ENCODE measurements at regions of chr13 and their contacts with region 1.

Region 1: DNA sequence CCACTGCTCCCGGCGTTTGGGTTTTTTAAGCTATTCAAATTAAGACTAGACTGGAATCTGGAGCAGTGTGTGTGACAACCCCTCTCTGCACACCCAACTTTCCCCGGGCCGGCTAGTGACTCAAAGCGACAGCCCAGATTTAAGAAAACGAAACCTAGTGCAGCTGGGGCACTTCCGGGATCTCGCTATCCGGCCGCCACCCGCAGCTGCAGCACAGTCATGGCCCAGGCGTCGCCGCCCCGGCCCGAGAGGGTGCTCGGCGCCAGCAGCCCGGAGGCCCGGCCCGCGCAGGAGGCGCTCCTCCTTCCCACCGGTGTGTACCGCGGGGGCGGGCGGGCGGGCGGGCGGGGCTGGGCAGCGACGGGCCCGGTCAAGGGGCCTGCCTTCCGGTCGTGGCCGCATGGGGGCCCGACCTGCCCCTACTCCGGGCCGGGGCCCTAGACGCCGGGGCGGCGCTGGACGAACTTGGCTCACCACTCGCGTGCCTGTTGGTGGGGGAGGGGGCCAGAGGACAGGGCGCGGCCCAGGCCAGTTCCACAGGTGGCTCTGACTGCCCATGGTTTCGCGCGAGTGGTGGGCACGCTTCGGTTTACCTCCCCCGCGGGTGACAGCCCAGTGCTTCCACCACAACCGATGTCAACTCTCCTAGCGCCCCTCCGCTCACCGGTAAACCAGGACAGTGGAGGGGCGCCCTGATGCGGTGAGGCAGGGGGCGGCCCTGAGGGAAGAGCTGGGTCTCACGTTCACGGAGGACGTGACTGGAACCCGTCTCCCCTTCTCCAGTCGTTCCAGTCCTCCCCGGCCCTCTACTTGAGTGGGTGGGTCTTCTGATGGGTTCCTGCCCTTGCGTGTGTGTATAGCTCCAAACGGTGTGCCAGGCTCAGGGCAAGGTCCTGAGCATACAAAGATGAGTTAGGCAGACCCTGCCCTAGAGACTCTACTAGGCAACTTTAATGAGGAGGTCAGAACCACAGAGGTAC is at the start of gene PHF11:
- DNase-seq: peak; percentile 92
- ATAC-seq: peak; percentile 80
- H3K4me3 ChIP-seq: peak within 1 kb of the TSS; percentile 67 to 90 (median 77)
- H3K4me3 Mint-ChIP-seq: peak within 1 kb of the TSS; percentile 95
- H3K27ac ChIP-seq: peak within 1 kb of the TSS; percentile 89 to 95
- H3K27ac Mint-ChIP-seq: peak within 1 kb of the TSS; percentile 99
- H3K4me1 ChIP-seq: peaks cover 6 to 20% of the 10 kb centered on the region in 2 donors
- H3K4me1 Mint-ChIP-seq: peaks cover 40% of the 10 kb centered on the region
- H3K27me3 ChIP-seq: no peaks in the 10 kb centered on the region
- H3K27me3 Mint-ChIP-seq: no peaks in the 10 kb centered on the region
- CTCF ChIP-seq: no peak
- total RNA-seq, gene PHF11: 176 and 181 TPM in 2 replicates

Region 2: DNA sequence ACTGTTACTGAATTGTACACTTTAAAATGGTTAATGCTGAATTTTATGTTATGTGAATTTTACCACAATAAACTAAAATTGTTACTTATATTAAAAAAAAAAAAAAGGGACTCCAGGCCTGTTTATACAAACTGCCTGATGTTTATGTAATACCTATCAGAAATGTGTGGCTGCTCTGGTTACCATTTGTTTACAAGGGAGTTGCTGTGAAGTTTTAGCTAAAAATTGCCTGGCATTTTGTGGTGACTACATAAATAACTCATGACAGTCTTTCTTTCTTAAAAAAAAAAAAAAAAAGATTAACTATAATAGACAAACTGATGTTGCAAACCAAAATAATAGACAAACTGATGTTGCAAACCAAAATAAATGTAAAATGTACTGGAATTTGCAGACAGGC is 176.5 kb before region 1 on chr13:
- CTCF ChIA-PET with region 1: no interaction called
- POLR2A ChIA-PET with region 1: interaction called, 11 read pairs
- intact Hi-C with region 1: no loop called
- DNase-seq: no peak
- ATAC-seq: no peak
- H3K4me3 ChIP-seq: no peak overlapping the region
- H3K4me3 Mint-ChIP-seq: no peak overlapping the region
- H3K27ac ChIP-seq: no peak overlapping the region
- H3K27ac Mint-ChIP-seq: no peak overlapping the region
- H3K4me1 ChIP-seq: peaks cover 8 to 13% of the 10 kb centered on the region in 2 donors
- H3K4me1 Mint-ChIP-seq: peaks cover 18% of the 10 kb centered on the region
- H3K27me3 ChIP-seq: no peaks in the 10 kb centered on the region
- H3K27me3 Mint-ChIP-seq: no peaks in the 10 kb centered on the region
- CTCF ChIP-seq: no peak

Region 3: GRCh38 chr13:49530457-49530856 is 34.4 kb after region 1 on chr13:
- CTCF ChIA-PET with region 1: no interaction called
- POLR2A ChIA-PET with region 1: interaction called, 5 read pairs
- intact Hi-C with region 1: loop called (anchors 1 kb)
- DNase-seq: peak; percentile 77
- ATAC-seq: peak; percentile 84
- H3K4me3 ChIP-seq: peak overlapping the region in 1 of 5 experiments; percentile 5
- H3K4me3 Mint-ChIP-seq: peak overlapping the region; percentile 59
- H3K27ac ChIP-seq: peak overlapping the region; percentile 66 to 82
- H3K27ac Mint-ChIP-seq: peak overlapping the region; percentile 92
- H3K4me1 ChIP-seq: peaks cover 44 to 50% of the 10 kb centered on the region in 2 donors
- H3K4me1 Mint-ChIP-seq: peaks cover 66% of the 10 kb centered on the region
- H3K27me3 ChIP-seq: no peaks in the 10 kb centered on the region
- H3K27me3 Mint-ChIP-seq: no peaks in the 10 kb centered on the region
- CTCF ChIP-seq: no peak

Region 4: DNA sequence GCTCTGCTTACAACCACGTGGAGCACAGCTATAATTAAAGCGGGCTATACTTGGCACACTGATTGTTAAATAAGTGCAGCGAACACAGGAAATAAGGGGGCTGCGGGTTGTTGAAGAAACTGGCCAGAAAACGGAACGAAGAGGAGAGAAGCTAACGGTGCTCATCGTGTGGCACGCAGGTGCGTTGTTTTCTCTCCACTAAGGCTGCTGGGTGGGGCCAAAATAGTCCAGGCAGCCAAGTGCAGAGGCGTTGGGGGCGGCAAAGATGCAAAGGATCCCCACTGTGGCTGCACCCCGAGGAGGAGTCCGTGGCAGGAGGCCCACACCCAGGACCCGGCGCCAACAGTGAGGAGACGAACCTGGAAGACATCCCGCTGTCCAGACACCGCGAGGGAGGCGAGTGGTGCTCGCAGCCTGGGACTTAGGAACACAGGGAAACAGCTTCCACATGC is 124.1 kb after region 1 on chr13:
- CTCF ChIA-PET with region 1: no interaction called
- POLR2A ChIA-PET with region 1: interaction called, 12 read pairs
- intact Hi-C with region 1: no loop called
- DNase-seq: no peak
- ATAC-seq: peak; percentile 95
- H3K4me3 ChIP-seq: peak overlapping the region in 3 of 5 experiments; percentile 9 to 48 (median 35)
- H3K4me3 Mint-ChIP-seq: peak overlapping the region; percentile 81
- H3K27ac ChIP-seq: peak overlapping the region in 1 of 2 donors; percentile 60
- H3K27ac Mint-ChIP-seq: peak overlapping the region; percentile 85
- H3K4me1 ChIP-seq: no peaks in the 10 kb centered on the region
- H3K4me1 Mint-ChIP-seq: peaks cover 25% of the 10 kb centered on the region
- H3K27me3 ChIP-seq: no peaks in the 10 kb centered on the region
- H3K27me3 Mint-ChIP-seq: no peaks in the 10 kb centered on the region
- CTCF ChIP-seq: no peak

Region 5: DNA sequence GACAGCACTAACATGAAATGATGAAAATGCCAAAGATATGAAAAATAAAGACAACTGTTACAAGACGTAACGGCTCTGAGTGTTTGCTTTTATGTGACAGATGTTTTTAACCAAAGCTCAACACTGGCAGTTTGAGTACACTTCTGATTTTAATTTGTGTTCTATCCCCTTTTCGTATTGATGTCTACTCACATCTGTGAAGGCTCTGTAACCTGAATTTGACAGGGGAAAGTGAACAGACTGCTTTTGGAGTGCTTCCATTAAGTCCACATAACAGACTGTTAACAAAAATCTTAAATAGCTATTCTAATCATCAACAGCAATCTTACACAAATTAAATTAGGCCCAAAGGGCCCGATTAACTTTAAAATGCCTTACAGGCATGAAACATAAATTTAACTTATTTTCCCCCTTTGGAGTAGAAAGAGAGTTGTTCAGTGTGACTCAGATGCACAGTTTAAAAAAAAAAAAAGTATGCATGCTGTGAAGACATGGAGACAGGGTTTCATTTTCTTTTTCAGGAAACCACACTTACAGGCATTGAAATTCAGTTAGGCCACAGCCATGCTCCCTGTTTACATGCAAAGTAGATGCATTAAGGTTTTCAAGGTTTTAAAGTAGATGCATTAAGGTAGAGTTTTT is 1397.3 kb after region 1 on chr13:
- CTCF ChIA-PET with region 1: no interaction called
- POLR2A ChIA-PET with region 1: no interaction called
- intact Hi-C with region 1: no loop called
- DNase-seq: peak; percentile 64
- ATAC-seq: peak; percentile 83
- H3K4me3 ChIP-seq: peak overlapping the region in 4 of 5 experiments; percentile 11 to 55 (median 30)
- H3K4me3 Mint-ChIP-seq: peak overlapping the region; percentile 85
- H3K27ac ChIP-seq: peak overlapping the region; percentile 76 to 78
- H3K27ac Mint-ChIP-seq: peak overlapping the region; percentile 95
- H3K4me1 ChIP-seq: peaks cover 53 to 56% of the 10 kb centered on the region in 2 donors
- H3K4me1 Mint-ChIP-seq: peaks cover 57% of the 10 kb centered on the region
- H3K27me3 ChIP-seq: no peaks in the 10 kb centered on the region
- H3K27me3 Mint-ChIP-seq: no peaks in the 10 kb centered on the region
- CTCF ChIP-seq: no peak